ENCODE measurements at regions of chr6 and their contacts with region 1.

Region 1: GRCh38 chr6:12895721-12896120 is 179.2 kb downstream of the PHACTR1 start:
- DNase-seq: no peak
- ATAC-seq: no peak
- H3K4me3 ChIP-seq: no peak overlapping the region
- H3K27ac ChIP-seq: no peak overlapping the region
- H3K4me1 ChIP-seq: no peaks in the 10 kb centered on the region
- H3K27me3 ChIP-seq: peaks cover 2 to 12% of the 10 kb centered on the region in 2 experiments; a peak in 3 of 5 replicates
- CTCF ChIP-seq: no peak
- EP300 ChIP-seq: no peak
- POLR2A ChIP-seq: no peak
- RAD21 ChIP-seq: no peak

Region 2: GRCh38 chr6:12637960-12638641 is 257.6 kb before region 1 on chr6:
- CTCF ChIA-PET with region 1: no interaction called
- POLR2A ChIA-PET with region 1: no interaction called
- in situ Hi-C with region 1: no loop called
- intact Hi-C with region 1: loop called (anchors 2 kb)
- DNase-seq: peak; percentile 24 to 60 (median 40)
- ATAC-seq: peak; percentile 96
- H3K4me3 ChIP-seq: no peak overlapping the region
- H3K27ac ChIP-seq: no peak overlapping the region
- H3K4me1 ChIP-seq: no peaks in the 10 kb centered on the region
- H3K27me3 ChIP-seq: no peaks in the 10 kb centered on the region
- CTCF ChIP-seq: peak; percentile 72 to 80 (median 73)
- EP300 ChIP-seq: no peak
- POLR2A ChIP-seq: no peak
- RAD21 ChIP-seq: peak; percentile 48 to 64